ENCODE measurements at regions of chrX and their contacts with region 1.

Region 1: GRCh38 chrX:13487731-13488523 is 81.5 kb upstream of the EGFL6 start:
- DNase-seq: peak; percentile 88
- ATAC-seq: peak; percentile 77
- H3K4me3 ChIP-seq: no peak overlapping the region
- H3K27ac ChIP-seq: peak overlapping the region; percentile 97
- H3K4me1 ChIP-seq: peaks cover 2% of the 10 kb centered on the region; the same call in 1 of the 2 replicates
- H3K27me3 ChIP-seq: no peaks in the 10 kb centered on the region
- CTCF ChIP-seq: peak; percentile 77
- POLR2A ChIP-seq: no peak
- RAD21 ChIP-seq: peak; percentile 86

Region 2: DNA sequence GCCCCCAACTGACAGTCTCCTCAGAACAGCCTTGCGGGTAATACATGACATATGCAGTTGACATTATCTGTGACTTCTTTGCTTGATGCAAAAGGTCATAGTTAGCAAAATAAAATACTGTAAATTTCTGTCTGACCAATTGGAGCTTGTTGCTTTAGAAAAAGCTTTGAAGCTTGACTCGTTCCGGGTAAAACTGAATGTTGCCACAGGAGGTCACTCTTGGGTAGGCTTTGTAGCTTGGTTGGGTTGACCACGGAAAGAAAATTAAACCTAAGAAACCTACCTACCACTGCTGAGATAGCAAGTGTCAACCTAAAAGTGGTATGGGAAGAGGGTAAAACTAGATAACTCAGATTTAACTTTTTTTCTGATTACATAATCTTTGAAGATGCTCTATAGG is 673.5 kb before region 1 on chrX:
- CTCF ChIA-PET with region 1: no interaction called
- POLR2A ChIA-PET with region 1: no interaction called
- dilution Hi-C with region 1: no loop called
- in situ Hi-C with region 1: loop called (anchors 25 kb)
- intact Hi-C with region 1: loop called (anchors 1 kb)
- DNase-seq: peak; percentile 62
- ATAC-seq: peak; percentile 87
- H3K4me3 ChIP-seq: no peak overlapping the region
- H3K27ac ChIP-seq: no peak overlapping the region
- H3K4me1 ChIP-seq: no peaks in the 10 kb centered on the region
- H3K27me3 ChIP-seq: no peaks in the 10 kb centered on the region
- CTCF ChIP-seq: peak; percentile 60
- POLR2A ChIP-seq: no peak
- RAD21 ChIP-seq: peak; percentile 71

Region 3: GRCh38 chrX:12974796-12975669 is 512.9 kb before region 1 on chrX and contains the start of gene TMSB4X:
- CTCF ChIA-PET with region 1: interaction called, 6 read pairs
- POLR2A ChIA-PET with region 1: interaction called, 6 read pairs
- dilution Hi-C with region 1: no loop called
- in situ Hi-C with region 1: no loop called
- intact Hi-C with region 1: loop called (anchors 1 kb)
- DNase-seq: peak; percentile 74
- ATAC-seq: peak; percentile 66
- H3K4me3 ChIP-seq: peak within 1 kb of the TSS; percentile 89
- H3K27ac ChIP-seq: peak within 1 kb of the TSS; percentile 96
- H3K4me1 ChIP-seq: peaks cover 2% of the 10 kb centered on the region
- H3K27me3 ChIP-seq: no peaks in the 10 kb centered on the region
- CTCF ChIP-seq: no peak
- POLR2A ChIP-seq: peak; percentile 99
- RAD21 ChIP-seq: no peak; the same call in 1 of the 2 replicates
- total RNA-seq, gene TMSB4X: 9,222 and 11,116 TPM in 2 replicates

Region 4: GRCh38 chrX:13123857-13124345 is 364.0 kb before region 1 on chrX:
- CTCF ChIA-PET with region 1: interaction called, 4 read pairs
- POLR2A ChIA-PET with region 1: no interaction called
- dilution Hi-C with region 1: no loop called
- in situ Hi-C with region 1: loop called (anchors 25 kb)
- intact Hi-C with region 1: loop called (anchors 2 kb)
- DNase-seq: peak; percentile 85
- ATAC-seq: peak; percentile 60
- H3K4me3 ChIP-seq: no peak overlapping the region
- H3K27ac ChIP-seq: peak overlapping the region; percentile 96
- H3K4me1 ChIP-seq: peaks cover 7% of the 10 kb centered on the region
- H3K27me3 ChIP-seq: no peaks in the 10 kb centered on the region
- CTCF ChIP-seq: no peak
- POLR2A ChIP-seq: no peak
- RAD21 ChIP-seq: no peak

Region 5: GRCh38 chrX:13283950-13284914 is 203.7 kb before region 1 on chrX:
- CTCF ChIA-PET with region 1: no interaction called
- POLR2A ChIA-PET with region 1: no interaction called
- dilution Hi-C with region 1: no loop called
- in situ Hi-C with region 1: no loop called
- intact Hi-C with region 1: loop called (anchors 2 kb)
- DNase-seq: peak; percentile 78
- ATAC-seq: 0 out of 2 replicates have a peak, but pooled peaks have one; percentile 21
- H3K4me3 ChIP-seq: no peak overlapping the region
- H3K27ac ChIP-seq: peak overlapping the region; percentile 25; the same call in 1 of the 2 replicates
- H3K4me1 ChIP-seq: peaks cover 11% of the 10 kb centered on the region; the same call in 1 of the 2 replicates
- H3K27me3 ChIP-seq: no peaks in the 10 kb centered on the region
- CTCF ChIP-seq: no peak
- POLR2A ChIP-seq: no peak
- RAD21 ChIP-seq: no peak

Region 6: GRCh38 chrX:13428055-13428786 is 59.7 kb before region 1 on chrX:
- CTCF ChIA-PET with region 1: interaction called, 4 read pairs
- POLR2A ChIA-PET with region 1: no interaction called
- dilution Hi-C with region 1: no loop called
- in situ Hi-C with region 1: no loop called
- intact Hi-C with region 1: loop called (anchors 2 kb)
- DNase-seq: peak; percentile 72
- ATAC-seq: peak; percentile 56
- H3K4me3 ChIP-seq: no peak overlapping the region
- H3K27ac ChIP-seq: peak overlapping the region; percentile 7; the same call in 1 of the 2 replicates
- H3K4me1 ChIP-seq: peaks cover 9% of the 10 kb centered on the region
- H3K27me3 ChIP-seq: no peaks in the 10 kb centered on the region
- CTCF ChIP-seq: no peak
- POLR2A ChIP-seq: no peak
- RAD21 ChIP-seq: no peak

Region 7: DNA sequence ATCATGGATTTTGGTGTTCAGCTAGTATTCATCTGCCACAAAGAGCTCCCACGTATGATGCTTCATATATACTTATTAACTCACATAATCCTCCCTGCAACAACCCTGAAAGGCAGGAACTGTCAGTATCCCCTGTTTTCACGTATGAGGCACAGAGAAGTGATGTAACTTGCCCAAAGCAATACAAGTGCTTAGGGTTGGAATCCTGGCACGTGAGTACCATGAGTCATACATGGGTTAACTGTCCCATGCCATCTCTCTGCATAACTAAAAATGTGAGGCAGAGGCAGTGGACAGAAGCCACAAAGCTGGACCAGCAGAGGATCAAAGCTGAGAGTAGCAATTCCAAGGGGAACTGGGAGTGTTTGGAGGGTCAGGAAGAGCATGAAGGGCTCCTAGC is 45.8 kb after region 1 on chrX:
- CTCF ChIA-PET with region 1: no interaction called
- POLR2A ChIA-PET with region 1: no interaction called
- dilution Hi-C with region 1: no loop called
- in situ Hi-C with region 1: no loop called
- intact Hi-C with region 1: no loop called
- DNase-seq: peak; percentile 24
- ATAC-seq: peak; percentile 51
- H3K4me3 ChIP-seq: no peak overlapping the region
- H3K27ac ChIP-seq: no peak overlapping the region
- H3K4me1 ChIP-seq: no peaks in the 10 kb centered on the region
- H3K27me3 ChIP-seq: peaks cover 6% of the 10 kb centered on the region
- CTCF ChIP-seq: no peak
- POLR2A ChIP-seq: no peak
- RAD21 ChIP-seq: no peak

Measured in IMR-90 (cell line).